Caco-2 (cell line): ENCODE measurements at regions of chr19 and their contacts with region 1.

Region 1: DNA sequence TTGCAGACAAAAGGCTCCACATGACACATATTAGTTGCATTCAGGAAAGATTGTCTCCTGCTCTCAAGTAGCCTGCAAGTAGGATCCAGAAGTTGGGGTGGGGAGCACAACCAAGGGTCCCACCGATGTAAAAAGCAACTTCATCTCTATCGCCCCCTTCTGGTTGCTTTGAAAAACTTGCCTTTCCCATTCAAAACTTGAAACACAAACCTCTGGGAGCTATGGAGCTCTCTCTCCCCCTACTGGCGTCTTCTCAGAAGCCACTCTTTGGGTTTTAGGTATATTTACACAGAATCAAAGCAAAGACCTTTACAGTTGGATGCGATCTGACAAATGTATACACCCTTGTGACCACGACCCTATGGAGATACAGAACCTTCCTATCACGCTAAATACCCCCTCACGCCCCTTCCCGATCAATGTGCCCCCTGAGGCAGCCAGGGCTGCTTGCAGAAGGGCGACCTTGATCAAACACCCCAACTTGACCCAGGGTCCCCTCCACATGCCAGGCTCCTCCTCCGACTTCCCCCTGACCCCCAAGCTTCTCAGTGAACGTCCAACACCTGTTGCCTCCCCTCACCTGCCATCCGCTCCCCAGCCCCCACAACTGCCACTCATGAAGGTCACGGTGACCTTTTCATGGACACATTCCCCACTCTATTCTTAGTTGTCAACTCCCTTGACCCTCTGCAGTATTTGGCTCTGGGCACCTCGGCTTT is 10.1 kb downstream of the NOSIP start:
- DNase-seq: peak; percentile 75 to 84
- H3K4me3 ChIP-seq: no peak overlapping the region
- H3K4me3 Mint-ChIP-seq: no peak overlapping the region
- H3K27ac Mint-ChIP-seq: peak overlapping the region; percentile 2
- H3K4me1 ChIP-seq: peaks cover 5% of the 10 kb centered on the region; the same call in 1 of the 2 replicates
- H3K4me1 Mint-ChIP-seq: peaks cover 17% of the 10 kb centered on the region
- H3K27me3 ChIP-seq: no peaks in the 10 kb centered on the region
- H3K27me3 Mint-ChIP-seq: no peaks in the 10 kb centered on the region
- CTCF ChIP-seq: peak; percentile 98 to 99

Region 2: DNA sequence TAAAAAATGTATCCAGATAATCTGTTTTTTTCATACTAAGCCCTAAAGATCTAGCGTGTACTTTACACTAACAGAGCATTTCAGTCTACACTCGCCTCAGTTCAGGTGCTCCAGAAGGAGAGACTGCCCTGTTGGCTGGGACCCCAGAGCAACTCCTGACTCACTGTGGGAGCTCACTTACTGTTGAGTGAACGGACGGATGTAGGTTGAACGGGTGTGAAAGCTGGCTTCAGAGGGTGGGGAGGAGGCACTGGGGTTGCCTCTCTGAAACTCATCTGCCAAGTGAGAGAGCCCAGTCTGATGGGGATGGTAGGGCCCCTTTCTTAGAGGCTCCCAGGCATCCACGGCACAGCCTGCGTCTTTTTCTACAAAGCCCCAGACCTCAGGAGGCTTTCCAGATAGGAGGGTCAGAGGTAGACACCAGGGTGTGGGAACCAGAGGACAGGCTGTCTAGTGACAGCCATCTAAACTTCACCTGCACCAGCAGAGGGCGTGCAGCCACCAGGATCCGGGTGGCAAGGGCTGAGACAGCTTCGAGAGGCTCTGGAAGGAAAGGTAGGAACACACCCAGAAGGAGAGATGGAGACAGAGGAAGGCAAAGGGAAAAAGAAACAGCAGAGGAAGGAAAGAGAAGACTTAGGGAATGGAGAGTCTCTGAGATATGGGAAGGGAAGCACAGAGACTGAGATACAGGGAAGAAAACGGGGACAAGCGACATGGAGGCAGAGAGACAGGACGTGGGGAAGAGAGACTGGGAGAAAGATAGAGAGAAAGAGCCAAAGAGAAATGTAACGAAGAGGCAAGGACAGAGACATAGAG is 178.5 kb before region 1 on chr19:
- CTCF ChIA-PET with region 1: interaction called, 6 read pairs
- POLR2A ChIA-PET with region 1: no interaction called
- intact Hi-C with region 1: loop called (anchors 2 kb)
- DNase-seq: peak; percentile 87 to 89
- H3K4me3 ChIP-seq: no peak overlapping the region
- H3K4me3 Mint-ChIP-seq: no peak overlapping the region
- H3K27ac Mint-ChIP-seq: no peak overlapping the region
- H3K4me1 ChIP-seq: no peaks in the 10 kb centered on the region
- H3K4me1 Mint-ChIP-seq: peaks cover 12% of the 10 kb centered on the region
- H3K27me3 ChIP-seq: no peaks in the 10 kb centered on the region
- H3K27me3 Mint-ChIP-seq: peaks cover 7% of the 10 kb centered on the region
- CTCF ChIP-seq: peak; percentile 94 to 95

Region 3: DNA sequence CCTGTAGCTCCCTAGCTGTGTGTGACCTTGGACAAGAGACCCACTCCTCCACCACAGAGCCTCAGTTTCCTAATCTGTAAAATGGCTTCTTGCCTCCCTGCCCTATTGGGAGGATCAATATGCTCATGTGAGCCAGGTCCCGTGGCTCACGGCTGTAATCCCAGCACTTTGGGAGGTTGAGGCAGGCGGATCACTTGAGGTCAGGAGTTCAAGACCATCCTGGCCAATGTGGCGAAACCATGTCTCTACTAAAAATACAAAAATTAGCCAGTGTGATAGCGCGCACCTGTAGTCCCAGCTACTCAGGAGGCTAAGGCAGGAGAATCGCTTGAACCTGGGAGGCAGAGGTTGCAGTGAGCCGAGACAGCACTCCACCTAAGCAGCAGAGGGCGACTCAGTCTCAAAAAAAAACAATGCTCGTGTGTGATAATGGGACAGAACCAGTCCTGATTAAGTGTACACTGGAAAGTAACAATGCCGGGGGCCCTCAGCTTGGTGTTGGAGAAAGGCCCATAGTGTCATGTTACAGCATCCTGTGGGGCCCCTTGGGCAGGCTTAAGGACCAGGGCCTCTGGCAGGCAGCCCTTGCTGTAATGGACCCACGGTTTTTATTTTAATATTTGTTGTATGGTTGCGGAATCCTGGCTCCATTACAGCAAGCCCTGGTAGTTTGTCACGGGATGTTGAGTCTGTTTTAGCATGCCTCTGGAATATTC is 67.3 kb before region 1 on chr19:
- CTCF ChIA-PET with region 1: interaction called, 48 read pairs
- POLR2A ChIA-PET with region 1: no interaction called
- intact Hi-C with region 1: loop called (anchors 1 kb)
- DNase-seq: peak; percentile 69 to 73
- H3K4me3 ChIP-seq: no peak overlapping the region
- H3K4me3 Mint-ChIP-seq: no peak overlapping the region
- H3K27ac Mint-ChIP-seq: no peak overlapping the region
- H3K4me1 ChIP-seq: peaks cover 5% of the 10 kb centered on the region; the same call in 1 of the 2 replicates
- H3K4me1 Mint-ChIP-seq: peaks cover 7% of the 10 kb centered on the region
- H3K27me3 ChIP-seq: no peaks in the 10 kb centered on the region
- H3K27me3 Mint-ChIP-seq: no peaks in the 10 kb centered on the region
- CTCF ChIP-seq: peak; percentile 65 to 76

Region 4: GRCh38 chr19:49546825-49547565 is 23.3 kb before region 1 on chr19:
- CTCF ChIA-PET with region 1: interaction called, 41 read pairs
- POLR2A ChIA-PET with region 1: interaction called, 3 read pairs
- intact Hi-C with region 1: loop called (anchors 1 kb)
- DNase-seq: peak; percentile 88 to 89
- H3K4me3 ChIP-seq: no peak overlapping the region
- H3K4me3 Mint-ChIP-seq: peak overlapping the region; percentile 54
- H3K27ac Mint-ChIP-seq: peak overlapping the region; percentile 44
- H3K4me1 ChIP-seq: peaks cover 3% of the 10 kb centered on the region; the same call in 1 of the 2 replicates
- H3K4me1 Mint-ChIP-seq: peaks cover 21% of the 10 kb centered on the region
- H3K27me3 ChIP-seq: no peaks in the 10 kb centered on the region
- H3K27me3 Mint-ChIP-seq: no peaks in the 10 kb centered on the region
- CTCF ChIP-seq: peak; percentile 84 to 86

Region 5: GRCh38 chr19:49580264-49581006 is 10.1 kb after region 1 on chr19 and contains the start of gene NOSIP:
- CTCF ChIA-PET with region 1: interaction called, 16 read pairs
- POLR2A ChIA-PET with region 1: interaction called, 3 read pairs
- intact Hi-C with region 1: no loop called
- DNase-seq: peak; percentile 97
- H3K4me3 ChIP-seq: peak within 1 kb of the TSS; percentile 99
- H3K4me3 Mint-ChIP-seq: peak within 1 kb of the TSS; percentile 95
- H3K27ac Mint-ChIP-seq: peak within 1 kb of the TSS; percentile 93
- H3K4me1 ChIP-seq: 0 out of 2 replicates have a peak, but pooled peaks cover 4% of the 10 kb centered on the region
- H3K4me1 Mint-ChIP-seq: no peaks in the 10 kb centered on the region
- H3K27me3 ChIP-seq: no peaks in the 10 kb centered on the region
- H3K27me3 Mint-ChIP-seq: no peaks in the 10 kb centered on the region
- CTCF ChIP-seq: no peak
- total RNA-seq, gene NOSIP: 74.7 and 77.7 TPM in 2 replicates

Region 6: GRCh38 chr19:49624967-49625910 is 54.9 kb after region 1 on chr19:
- CTCF ChIA-PET with region 1: no interaction called
- POLR2A ChIA-PET with region 1: no interaction called
- intact Hi-C with region 1: no loop called
- DNase-seq: no peak
- H3K4me3 ChIP-seq: no peak overlapping the region
- H3K4me3 Mint-ChIP-seq: no peak overlapping the region
- H3K27ac Mint-ChIP-seq: no peak overlapping the region
- H3K4me1 ChIP-seq: no peaks in the 10 kb centered on the region
- H3K4me1 Mint-ChIP-seq: no peaks in the 10 kb centered on the region
- H3K27me3 ChIP-seq: no peaks in the 10 kb centered on the region
- H3K27me3 Mint-ChIP-seq: no peaks in the 10 kb centered on the region
- CTCF ChIP-seq: no peak

Region 7: GRCh38 chr19:49786376-49786820 is 216.1 kb after region 1 on chr19:
- CTCF ChIA-PET with region 1: no interaction called
- POLR2A ChIA-PET with region 1: no interaction called
- intact Hi-C with region 1: no loop called
- DNase-seq: peak; percentile 52 to 67
- H3K4me3 ChIP-seq: no peak overlapping the region
- H3K4me3 Mint-ChIP-seq: peak overlapping the region; percentile 52
- H3K27ac Mint-ChIP-seq: peak overlapping the region; percentile 80
- H3K4me1 ChIP-seq: peaks cover 15% of the 10 kb centered on the region
- H3K4me1 Mint-ChIP-seq: peaks cover 21% of the 10 kb centered on the region
- H3K27me3 ChIP-seq: no peaks in the 10 kb centered on the region
- H3K27me3 Mint-ChIP-seq: no peaks in the 10 kb centered on the region
- CTCF ChIP-seq: no peak